Endothelial cell of umbilical vein (primary cell): ENCODE measurements at regions of chr9 and their contacts with region 1.

Region 1: DNA sequence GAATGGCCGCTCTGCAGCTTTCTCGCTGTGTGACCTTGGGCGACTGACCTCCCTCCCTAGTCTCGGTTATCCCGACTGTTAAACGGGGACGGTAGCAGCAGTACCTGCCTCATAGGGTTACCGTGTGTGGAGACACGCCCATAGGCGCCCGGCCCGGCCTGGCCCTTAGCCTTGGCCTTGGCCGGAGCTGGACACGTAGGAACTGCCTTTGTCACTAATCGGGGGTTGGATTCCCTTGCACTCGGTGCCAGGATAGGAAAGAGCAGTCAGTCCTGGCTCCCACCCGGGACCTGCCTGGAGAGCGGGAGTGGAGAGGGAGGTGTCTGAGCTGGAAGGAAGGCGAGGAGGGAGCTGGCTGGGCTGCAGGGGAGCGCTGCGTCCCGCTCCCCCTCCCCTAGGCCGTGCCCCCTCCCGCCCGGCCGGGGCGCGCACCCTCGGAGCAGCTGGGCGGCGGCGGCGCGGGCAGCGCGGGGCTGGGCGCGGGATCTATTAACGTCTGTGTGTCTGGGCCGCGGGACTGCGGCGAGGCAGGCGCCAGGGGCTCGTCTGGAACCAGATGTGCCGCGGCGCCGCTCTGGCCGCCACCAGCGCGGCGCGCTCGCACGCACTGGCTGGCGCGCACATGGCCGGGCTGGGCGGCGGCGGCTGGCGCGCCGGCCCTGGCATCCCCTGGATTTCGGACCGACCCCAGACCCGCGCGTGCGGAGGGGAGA is 31.6 kb downstream of the PRRX2 start:
- DNase-seq: no peak
- H3K4me3 ChIP-seq: peak overlapping the region; percentile 33 to 44 (median 33)
- H3K27ac ChIP-seq: peak overlapping the region; percentile 56
- H3K4me1 ChIP-seq: peaks cover 5% of the 10 kb centered on the region
- H3K27me3 ChIP-seq: peaks cover 8 to 14% of the 10 kb centered on the region in 2 experiments
- CTCF ChIP-seq: no peak
- POLR2A ChIP-seq: no peak

Region 2: DNA sequence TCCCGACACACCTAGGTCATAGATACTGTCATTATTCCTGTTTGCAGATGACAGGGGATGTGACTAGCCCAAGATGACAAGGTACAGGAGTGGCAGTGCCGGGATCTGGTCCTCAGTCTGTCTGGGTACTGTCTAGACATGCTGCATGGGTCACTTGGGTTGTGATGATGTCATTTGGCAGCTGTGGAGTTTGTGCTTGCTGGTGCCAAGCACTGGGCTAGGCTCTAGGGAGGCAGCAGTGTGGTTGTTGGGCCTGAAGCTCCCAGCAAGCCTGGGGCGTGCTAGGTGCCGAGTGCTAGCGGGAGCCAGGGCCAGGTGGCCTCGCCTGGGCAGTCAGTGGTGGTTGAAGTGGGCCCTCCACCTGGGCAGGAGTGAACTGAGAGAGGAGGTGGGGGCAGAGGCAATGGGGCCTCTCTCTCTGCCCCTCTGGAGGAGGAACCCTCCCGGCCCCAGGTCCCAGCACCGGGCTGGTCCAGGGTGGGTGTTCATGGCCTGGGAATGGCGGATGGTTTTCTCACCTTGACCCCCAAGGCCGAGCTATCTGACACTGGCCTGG is 46.3 kb before region 1 on chr9:
- CTCF ChIA-PET with region 1: no interaction called
- POLR2A ChIA-PET with region 1: no interaction called
- dilution Hi-C with region 1: no loop called
- intact Hi-C with region 1: loop called (anchors 5 kb)
- DNase-seq: no peak
- H3K4me3 ChIP-seq: no peak overlapping the region
- H3K27ac ChIP-seq: no peak overlapping the region
- H3K4me1 ChIP-seq: no peaks in the 10 kb centered on the region
- H3K27me3 ChIP-seq: no peaks in the 10 kb centered on the region
- CTCF ChIP-seq: no peak
- POLR2A ChIP-seq: no peak